SK-N-SH (cell line): ENCODE measurements at regions of chr5 and their contacts with region 1.

Region 1: GRCh38 chr5:135466178-135467050 is 14.3 kb upstream of the TIFAB start:
- DNase-seq: peak; percentile 94
- H3K4me3 ChIP-seq: peak overlapping the region in 1 of 2 experiments; percentile 50; a peak in 1 of 4 replicates
- H3K27ac ChIP-seq: no peak overlapping the region
- H3K4me1 ChIP-seq: peaks cover 0 to 3% of the 10 kb centered on the region in 2 experiments; a peak in 1 of 4 replicates
- H3K27me3 ChIP-seq: peaks cover 51% of the 10 kb centered on the region
- CTCF ChIP-seq: peak; percentile 89
- EP300 ChIP-seq: no peak
- RAD21 ChIP-seq: peak; percentile 90

Region 2: GRCh38 chr5:135437796-135438560 is 28.4 kb before region 1 on chr5:
- CTCF ChIA-PET with region 1: interaction called, 11 read pairs
- POLR2A ChIA-PET with region 1: no interaction called
- DNase-seq: no peak
- H3K4me3 ChIP-seq: no peak overlapping the region
- H3K27ac ChIP-seq: peak overlapping the region; percentile 11 to 55; a peak in 1 of 4 replicates
- H3K4me1 ChIP-seq: peaks cover 0 to 42% of the 10 kb centered on the region in 2 experiments; a peak in 1 of 4 replicates
- H3K27me3 ChIP-seq: no peaks in the 10 kb centered on the region
- CTCF ChIP-seq: no peak
- EP300 ChIP-seq: peak in 1 of 2 experiments; percentile 38; a peak in 1 of 4 replicates
- RAD21 ChIP-seq: no peak

Region 3: GRCh38 chr5:135476615-135477582 is 10.5 kb after region 1 on chr5:
- CTCF ChIA-PET with region 1: interaction called, 52 read pairs
- POLR2A ChIA-PET with region 1: no interaction called
- DNase-seq: no peak
- H3K4me3 ChIP-seq: no peak overlapping the region
- H3K27ac ChIP-seq: no peak overlapping the region
- H3K4me1 ChIP-seq: no peaks in the 10 kb centered on the region; a peak in 1 of 4 replicates
- H3K27me3 ChIP-seq: peaks cover 17% of the 10 kb centered on the region
- CTCF ChIP-seq: no peak
- EP300 ChIP-seq: no peak
- RAD21 ChIP-seq: no peak

Region 4: GRCh38 chr5:135494196-135494595 is 27.8 kb after region 1 on chr5:
- CTCF ChIA-PET with region 1: interaction called, 20 read pairs
- POLR2A ChIA-PET with region 1: no interaction called
- DNase-seq: no peak
- H3K4me3 ChIP-seq: no peak overlapping the region
- H3K27ac ChIP-seq: peak overlapping the region in 1 of 2 experiments; percentile 76; a peak in 2 of 4 replicates
- H3K4me1 ChIP-seq: peaks cover 5 to 14% of the 10 kb centered on the region in 2 experiments; a peak in 3 of 4 replicates
- H3K27me3 ChIP-seq: no peaks in the 10 kb centered on the region
- CTCF ChIP-seq: no peak
- EP300 ChIP-seq: no peak
- RAD21 ChIP-seq: no peak

Region 5: GRCh38 chr5:135543485-135544304 is 77.3 kb after region 1 on chr5:
- CTCF ChIA-PET with region 1: interaction called, 791 read pairs
- POLR2A ChIA-PET with region 1: no interaction called
- DNase-seq: peak; percentile 69
- H3K4me3 ChIP-seq: peak overlapping the region; percentile 19 to 25; a peak in 3 of 4 replicates
- H3K27ac ChIP-seq: no peak overlapping the region
- H3K4me1 ChIP-seq: no peaks in the 10 kb centered on the region; a peak in 1 of 4 replicates
- H3K27me3 ChIP-seq: peaks cover 86% of the 10 kb centered on the region
- CTCF ChIP-seq: no peak
- EP300 ChIP-seq: no peak
- RAD21 ChIP-seq: no peak

Region 6: GRCh38 chr5:135829681-135830383 is 363.4 kb after region 1 on chr5:
- CTCF ChIA-PET with region 1: interaction called, 33 read pairs
- POLR2A ChIA-PET with region 1: no interaction called
- DNase-seq: peak; percentile 82
- H3K4me3 ChIP-seq: peak overlapping the region in 1 of 2 experiments; percentile 54; a peak in 1 of 4 replicates
- H3K27ac ChIP-seq: no peak overlapping the region
- H3K4me1 ChIP-seq: no peaks in the 10 kb centered on the region; a peak in 1 of 4 replicates
- H3K27me3 ChIP-seq: peaks cover 32% of the 10 kb centered on the region
- CTCF ChIP-seq: peak; percentile 90
- EP300 ChIP-seq: no peak
- RAD21 ChIP-seq: peak; percentile 84